Heart left ventricle (tissue), 16 donors: ENCODE measurements at regions of chr5 and their contacts with region 1.

Region 1: DNA sequence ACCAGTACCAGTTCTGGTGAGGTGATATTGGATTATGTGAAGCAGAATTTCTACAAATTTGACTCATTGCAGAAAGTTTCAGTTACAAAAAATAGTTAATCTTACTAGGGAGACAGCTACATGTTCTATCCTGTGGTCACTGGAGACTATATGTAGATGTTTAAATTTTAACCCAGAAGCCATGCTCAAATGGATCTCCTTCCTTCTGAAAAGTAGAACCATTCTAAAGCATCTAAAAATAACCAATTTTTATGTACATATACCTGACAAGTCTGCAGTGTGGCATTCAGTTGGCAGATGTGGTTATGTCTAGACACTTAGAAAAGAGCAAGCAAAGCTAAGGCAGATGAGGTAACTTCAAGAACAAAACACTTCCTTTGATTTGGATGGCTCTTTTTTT is 65.5 kb upstream of the POU4F3 start:
- DNase-seq: no peak
- ATAC-seq: no peak
- H3K4me3 ChIP-seq: no peak overlapping the region
- H3K27ac ChIP-seq: no peak overlapping the region
- H3K4me1 ChIP-seq: no peaks in the 10 kb centered on the region
- H3K27me3 ChIP-seq: no peaks in the 10 kb centered on the region
- CTCF ChIP-seq: no peak
- POLR2A ChIP-seq: no peak

Region 2: DNA sequence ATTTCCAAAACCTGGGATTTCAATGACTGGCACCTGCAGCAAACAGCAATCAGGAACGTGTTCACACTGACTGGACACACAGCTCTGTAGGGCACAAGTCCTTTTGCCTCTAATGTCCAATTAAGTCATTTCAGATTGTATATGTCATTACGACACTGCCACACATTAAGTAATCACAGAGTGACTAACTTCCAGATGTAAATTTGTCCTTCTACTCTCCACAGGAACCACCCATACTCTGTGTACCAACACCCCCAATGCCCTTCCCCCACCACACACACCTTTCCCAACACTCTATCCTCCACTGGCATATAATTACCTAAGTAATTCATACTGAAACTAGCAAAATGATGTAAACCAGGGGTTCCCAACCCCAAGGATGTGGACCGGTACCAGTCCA is 121.1 kb before region 1 on chr5:
- intact Hi-C with region 1: loop called in 6 of 10 experiments (anchors 5 to 10 kb)
- DNase-seq: no peak
- ATAC-seq: no peak
- H3K4me3 ChIP-seq: no peak overlapping the region
- H3K27ac ChIP-seq: no peak overlapping the region
- H3K4me1 ChIP-seq: no peaks in the 10 kb centered on the region
- H3K27me3 ChIP-seq: no peaks in the 10 kb centered on the region
- CTCF ChIP-seq: no peak
- POLR2A ChIP-seq: no peak

Region 3: GRCh38 chr5:146158257-146158656 is 114.9 kb before region 1 on chr5:
- intact Hi-C with region 1: loop called in 6 of 10 experiments (anchors 5 to 10 kb)
- DNase-seq: no peak
- ATAC-seq: no peak
- H3K4me3 ChIP-seq: no peak overlapping the region
- H3K27ac ChIP-seq: no peak overlapping the region
- H3K4me1 ChIP-seq: no peaks in the 10 kb centered on the region
- H3K27me3 ChIP-seq: no peaks in the 10 kb centered on the region
- CTCF ChIP-seq: no peak
- POLR2A ChIP-seq: no peak

Region 4: DNA sequence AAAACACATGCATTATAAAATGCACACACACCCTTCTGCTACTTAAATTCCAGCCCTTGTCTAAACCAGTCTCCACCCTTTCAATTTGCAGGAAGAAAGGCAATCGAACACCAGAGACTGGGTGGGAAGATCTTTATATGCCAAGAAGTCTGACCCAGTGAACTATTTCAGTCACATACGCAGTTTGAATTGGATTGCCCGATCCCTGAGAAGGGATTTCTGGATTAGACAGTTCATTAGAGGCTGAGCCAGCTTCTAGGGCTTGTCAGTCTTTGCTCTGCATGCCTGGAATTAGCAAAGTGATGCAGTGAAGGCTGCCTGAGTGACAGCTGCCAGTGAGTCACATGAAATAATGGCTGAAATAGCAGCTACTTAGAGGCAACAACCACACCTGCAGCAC is 445.5 kb after region 1 on chr5:
- intact Hi-C with region 1: no loop called
- DNase-seq: no peak
- ATAC-seq: no peak
- H3K4me3 ChIP-seq: no peak overlapping the region
- H3K27ac ChIP-seq: no peak overlapping the region
- H3K4me1 ChIP-seq: no peaks in the 10 kb centered on the region
- H3K27me3 ChIP-seq: no peaks in the 10 kb centered on the region
- CTCF ChIP-seq: no peak
- POLR2A ChIP-seq: no peak